ENCODE measurements at regions of chr14 and their contacts with region 1.

Region 1: DNA sequence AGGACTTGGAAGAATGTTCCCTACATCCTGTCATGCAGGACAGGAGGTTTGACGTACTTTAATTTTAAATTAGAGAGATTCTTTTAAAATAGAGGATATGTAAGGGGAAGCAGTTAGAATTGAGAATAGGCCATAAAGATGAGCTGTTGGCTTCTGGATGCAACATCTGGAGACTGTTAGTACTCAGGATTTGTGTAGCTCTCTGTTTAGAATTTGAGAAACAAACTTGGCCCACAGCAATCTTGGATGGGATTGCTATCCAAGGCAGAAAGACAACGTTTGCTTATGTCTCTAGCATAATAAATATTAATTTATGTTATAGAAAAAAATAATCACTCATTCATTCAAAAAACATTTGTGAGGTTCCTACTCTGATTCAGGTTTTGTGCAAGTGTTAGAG is 398.4 kb upstream of the NOVA1 start:
- DNase-seq: no peak
- ATAC-seq: no peak

Region 2: GRCh38 chr14:26966908-26967307 is 29.3 kb before region 1 on chr14:
- intact Hi-C with region 1: loop called in 1 of 2 experiments (anchors 2 kb)
- DNase-seq: no peak
- ATAC-seq: no peak